Activated CD4-positive, alpha-beta T cell treated with anti-CD3 and anti-CD28 coated beads, Interleukin-2, amount 10 ng/mL, durations not matched to agents 24 days and 14 days (primary cell): ENCODE measurements at regions of chr14 and their contacts with region 1.

Region 1: DNA sequence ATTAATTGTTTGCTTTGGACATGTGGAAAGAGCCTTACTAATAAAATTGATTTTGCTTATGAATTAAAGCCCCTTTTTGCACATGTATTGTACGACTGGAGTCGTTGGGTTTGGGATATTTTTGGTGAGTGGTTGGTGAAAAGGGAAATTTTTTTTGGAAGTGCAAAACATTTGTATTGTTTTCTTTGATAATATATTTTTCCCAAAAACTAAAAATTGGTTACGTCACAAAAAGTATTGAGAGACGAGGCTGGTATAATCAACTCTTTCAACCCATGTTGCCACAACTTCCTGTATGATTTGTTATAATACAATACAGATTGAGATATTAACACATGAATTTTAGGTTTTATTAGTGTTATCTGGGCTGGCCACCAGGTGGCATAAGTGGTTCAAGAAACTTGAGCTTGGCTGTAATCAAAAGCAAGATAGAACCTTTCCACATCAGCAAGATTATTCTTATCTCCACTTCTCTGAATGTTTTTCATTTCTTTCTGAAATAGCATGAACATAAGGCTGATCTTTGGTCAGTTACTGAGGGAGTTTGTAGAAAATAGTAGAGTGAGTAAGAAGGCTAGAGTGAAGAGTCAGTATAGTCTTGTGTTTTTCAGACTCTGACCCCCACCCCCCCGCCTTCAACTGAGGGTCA is 8.7 kb downstream of the NGDN start:
- DNase-seq: peak; percentile 89
- H3K4me3 Mint-ChIP-seq: no peak overlapping the region
- H3K27ac Mint-ChIP-seq: no peak overlapping the region
- H3K4me1 Mint-ChIP-seq: peaks cover 2% of the 10 kb centered on the region
- H3K27me3 Mint-ChIP-seq: no peaks in the 10 kb centered on the region

Region 2: GRCh38 chr14:23539248-23540140 is 61.3 kb after region 1 on chr14:
- intact Hi-C with region 1: loop called (anchors 1 kb)
- DNase-seq: peak; percentile 82
- H3K4me3 Mint-ChIP-seq: no peak overlapping the region
- H3K27ac Mint-ChIP-seq: no peak overlapping the region
- H3K4me1 Mint-ChIP-seq: peaks cover 6% of the 10 kb centered on the region
- H3K27me3 Mint-ChIP-seq: no peaks in the 10 kb centered on the region

Region 3: GRCh38 chr14:23567192-23568020 is 89.2 kb after region 1 on chr14 and contains the start of gene AP1G2:
- intact Hi-C with region 1: loop called (anchors 1 kb)
- DNase-seq: peak; percentile 97
- H3K4me3 Mint-ChIP-seq: peak within 1 kb of the TSS; percentile 99
- H3K27ac Mint-ChIP-seq: peak within 1 kb of the TSS; percentile 98
- H3K4me1 Mint-ChIP-seq: peaks cover 35% of the 10 kb centered on the region
- H3K27me3 Mint-ChIP-seq: peaks cover under 1% of the 10 kb centered on the region
- total RNA-seq, gene AP1G2: 135 and 142 TPM in 2 replicates